ENCODE measurements at regions of chr19 and their contacts with region 1.

Region 1: DNA sequence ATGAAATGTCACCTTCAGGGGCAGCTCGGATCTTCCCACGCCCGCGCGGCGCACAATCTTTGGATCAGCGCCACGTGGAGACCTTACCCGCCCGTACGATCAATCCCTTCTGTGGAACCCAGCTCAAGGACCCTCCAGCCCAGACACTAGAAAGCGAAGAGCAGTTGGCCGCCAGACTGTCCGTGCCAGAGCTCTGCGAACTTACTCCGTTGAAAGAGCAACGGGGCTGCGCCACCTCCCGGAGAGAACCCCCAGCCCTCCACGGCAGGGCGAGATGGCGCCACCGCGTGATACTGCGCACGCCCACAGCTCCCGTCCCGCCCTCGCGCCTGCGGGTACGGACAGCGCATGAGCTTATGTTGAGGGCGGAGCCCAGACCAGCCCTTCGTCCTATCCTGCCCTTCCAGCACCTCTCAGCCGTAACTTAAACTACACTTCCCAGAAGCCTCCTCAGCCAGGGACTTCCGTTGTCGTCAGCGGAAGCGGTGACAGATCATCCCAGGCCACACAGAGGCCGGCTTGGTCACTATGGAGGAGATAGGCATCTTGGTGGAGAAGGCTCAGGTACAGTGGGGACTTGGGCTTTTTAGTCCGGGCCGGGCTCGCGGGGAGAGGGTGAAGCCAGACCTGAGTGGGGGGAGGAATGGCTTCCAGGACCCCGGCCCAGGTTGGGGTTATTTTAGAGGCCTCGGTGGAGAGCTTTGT is at the start of gene PSMC4:
- H3K4me3 Mint-ChIP-seq: peak within 1 kb of the TSS; percentile 98
- H3K27ac Mint-ChIP-seq: peak within 1 kb of the TSS; percentile 96
- H3K4me1 Mint-ChIP-seq: peaks cover 30% of the 10 kb centered on the region
- H3K27me3 Mint-ChIP-seq: peaks cover 45% of the 10 kb centered on the region

Region 2: DNA sequence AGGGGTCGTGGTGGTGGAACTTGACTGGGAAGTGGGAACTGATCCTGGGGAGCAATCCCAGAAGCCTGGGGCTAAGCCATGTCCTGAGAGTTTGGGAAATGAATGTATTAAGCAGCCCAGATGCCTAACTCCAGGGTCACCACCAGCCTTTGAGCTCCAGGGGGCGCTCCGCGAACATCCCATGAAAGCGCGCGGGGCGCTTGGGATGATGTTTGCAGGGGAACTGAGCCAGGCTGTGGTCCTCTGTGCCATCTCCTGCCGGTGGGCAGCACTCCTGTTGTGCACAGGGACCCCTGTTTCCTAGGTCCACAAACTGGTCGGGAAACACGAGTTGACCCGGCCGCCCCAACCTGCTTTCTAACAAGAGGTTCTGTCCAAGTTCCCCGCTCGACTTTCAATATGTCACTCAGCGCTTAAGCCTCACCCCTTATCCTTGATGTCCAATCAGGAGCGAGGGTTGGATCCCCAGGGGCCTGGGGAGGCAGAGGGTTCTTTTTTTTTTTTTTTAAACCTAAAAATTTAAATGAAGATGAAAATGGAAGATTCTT is 177.8 kb before region 1 on chr19:
- intact Hi-C with region 1: loop called (anchors 2 kb)
- H3K4me3 Mint-ChIP-seq: peak overlapping the region; percentile 74
- H3K27ac Mint-ChIP-seq: no peak overlapping the region
- H3K4me1 Mint-ChIP-seq: no peaks in the 10 kb centered on the region
- H3K27me3 Mint-ChIP-seq: peaks cover 19% of the 10 kb centered on the region

Region 3: GRCh38 chr19:39833464-39834286 is 137.2 kb before region 1 on chr19 and contains the start of gene DYRK1B:
- intact Hi-C with region 1: loop called (anchors 5 kb)
- H3K4me3 Mint-ChIP-seq: peak within 1 kb of the TSS; percentile 88
- H3K27ac Mint-ChIP-seq: peak within 1 kb of the TSS; percentile 86
- H3K4me1 Mint-ChIP-seq: peaks cover 42% of the 10 kb centered on the region
- H3K27me3 Mint-ChIP-seq: no peaks in the 10 kb centered on the region

Region 4: DNA sequence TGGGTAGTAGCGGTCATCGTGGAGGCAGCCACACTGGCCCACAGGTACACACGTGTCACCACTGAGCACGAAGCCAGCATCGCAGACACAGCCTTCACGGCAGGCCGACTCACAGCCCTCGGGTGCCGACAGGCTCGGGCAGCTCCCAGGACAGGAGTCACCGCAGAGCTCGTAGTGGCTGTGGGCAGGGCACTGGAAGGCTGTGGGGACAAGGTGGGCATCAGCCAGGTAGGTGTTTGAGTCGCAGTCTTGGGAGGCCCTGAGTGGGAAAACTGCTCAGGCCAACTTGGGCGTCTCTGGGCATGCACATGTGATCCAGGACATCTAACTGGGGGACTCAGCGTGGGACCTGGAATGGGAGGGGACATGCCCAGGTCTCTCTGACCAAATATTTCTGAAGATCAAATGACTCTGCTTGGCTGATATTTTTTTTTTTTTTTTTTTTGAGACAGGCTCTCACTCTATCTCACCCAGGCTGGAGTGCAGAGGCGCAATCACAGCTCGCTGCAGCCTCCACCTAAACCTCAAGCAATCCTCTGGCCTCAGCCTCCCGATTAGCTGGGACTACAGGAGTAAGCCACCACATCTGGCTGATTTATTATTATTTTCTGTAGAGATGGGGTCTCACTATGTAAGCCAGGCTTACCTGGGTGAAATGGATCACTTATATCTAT is 80.8 kb before region 1 on chr19:
- intact Hi-C with region 1: loop called (anchors 5 kb)
- H3K4me3 Mint-ChIP-seq: no peak overlapping the region
- H3K27ac Mint-ChIP-seq: no peak overlapping the region
- H3K4me1 Mint-ChIP-seq: no peaks in the 10 kb centered on the region
- H3K27me3 Mint-ChIP-seq: peaks cover 37% of the 10 kb centered on the region

Region 5: GRCh38 chr19:39927524-39928356 is 43.1 kb before region 1 on chr19:
- intact Hi-C with region 1: loop called (anchors 5 kb)
- H3K4me3 Mint-ChIP-seq: no peak overlapping the region
- H3K27ac Mint-ChIP-seq: no peak overlapping the region
- H3K4me1 Mint-ChIP-seq: peaks cover 9% of the 10 kb centered on the region
- H3K27me3 Mint-ChIP-seq: peaks cover 97% of the 10 kb centered on the region

Region 6: GRCh38 chr19:39996811-39997594 is 26.2 kb after region 1 on chr19 and contains the start of gene ZNF546:
- intact Hi-C with region 1: loop called (anchors 1 kb)
- H3K4me3 Mint-ChIP-seq: peak within 1 kb of the TSS; percentile 97
- H3K27ac Mint-ChIP-seq: peak within 1 kb of the TSS; percentile 93
- H3K4me1 Mint-ChIP-seq: peaks cover 15% of the 10 kb centered on the region
- H3K27me3 Mint-ChIP-seq: no peaks in the 10 kb centered on the region

Region 7: GRCh38 chr19:40025938-40026596 is 55.2 kb after region 1 on chr19:
- intact Hi-C with region 1: no loop called
- H3K4me3 Mint-ChIP-seq: no peak overlapping the region
- H3K27ac Mint-ChIP-seq: no peak overlapping the region
- H3K4me1 Mint-ChIP-seq: no peaks in the 10 kb centered on the region
- H3K27me3 Mint-ChIP-seq: no peaks in the 10 kb centered on the region

Region 8: GRCh38 chr19:40089462-40089861 is 118.6 kb after region 1 on chr19:
- intact Hi-C with region 1: loop called (anchors 10 kb)
- H3K4me3 Mint-ChIP-seq: peak overlapping the region; percentile 99
- H3K27ac Mint-ChIP-seq: no peak overlapping the region
- H3K4me1 Mint-ChIP-seq: peaks cover 47% of the 10 kb centered on the region
- H3K27me3 Mint-ChIP-seq: peaks cover 7% of the 10 kb centered on the region